Right cardiac atrium (tissue), 5 donors: ENCODE measurements at regions of chrX and their contacts with region 1.

Region 1: GRCh38 chrX:12946838-12947544 is 27.9 kb upstream of the TMSB4X start:
- DNase-seq: peak in 2 of 3 donors; percentile 61 to 77
- ATAC-seq: peak; percentile 65 to 84
- H3K4me3 ChIP-seq: no peak overlapping the region
- H3K27ac ChIP-seq: peak overlapping the region; percentile 27
- H3K4me1 ChIP-seq: peaks cover 3% of the 10 kb centered on the region
- H3K27me3 ChIP-seq: no peaks in the 10 kb centered on the region

Region 2: GRCh38 chrX:13487731-13488523 is 540.9 kb after region 1 on chrX:
- intact Hi-C with region 1: loop called in 2 of 4 experiments (anchors 10 kb)
- DNase-seq: peak in 1 of 3 donors; percentile 26
- ATAC-seq: peak; percentile 83 to 84
- H3K4me3 ChIP-seq: no peak overlapping the region
- H3K27ac ChIP-seq: peak overlapping the region; percentile 58
- H3K4me1 ChIP-seq: peaks cover 3% of the 10 kb centered on the region
- H3K27me3 ChIP-seq: no peaks in the 10 kb centered on the region

Region 3: DNA sequence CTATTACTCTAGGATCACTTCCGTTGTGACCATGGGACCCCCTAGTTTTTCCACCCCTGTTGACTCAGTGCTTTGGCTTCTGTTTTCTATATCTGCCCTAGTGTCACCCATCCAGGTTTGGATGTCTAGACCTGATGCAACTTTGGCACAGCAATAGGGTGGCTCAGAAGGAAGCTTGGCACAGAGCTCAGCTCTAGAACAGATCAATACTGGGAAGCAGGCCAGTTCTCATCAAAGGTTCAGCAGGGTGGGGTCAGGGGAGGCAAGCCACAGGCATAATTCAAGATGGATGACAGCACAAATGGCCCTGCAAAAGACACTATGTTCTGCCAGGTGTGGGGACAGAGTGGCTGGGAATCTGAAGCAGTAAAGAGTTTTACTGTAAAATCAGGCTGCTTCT is 548.2 kb after region 1 on chrX:
- intact Hi-C with region 1: loop called in 1 of 4 experiments (anchors 10 kb)
- DNase-seq: no peak
- ATAC-seq: no peak
- H3K4me3 ChIP-seq: no peak overlapping the region
- H3K27ac ChIP-seq: no peak overlapping the region
- H3K4me1 ChIP-seq: no peaks in the 10 kb centered on the region
- H3K27me3 ChIP-seq: no peaks in the 10 kb centered on the region